ENCODE measurements at regions of chr5 and their contacts with region 1.

Region 1: DNA sequence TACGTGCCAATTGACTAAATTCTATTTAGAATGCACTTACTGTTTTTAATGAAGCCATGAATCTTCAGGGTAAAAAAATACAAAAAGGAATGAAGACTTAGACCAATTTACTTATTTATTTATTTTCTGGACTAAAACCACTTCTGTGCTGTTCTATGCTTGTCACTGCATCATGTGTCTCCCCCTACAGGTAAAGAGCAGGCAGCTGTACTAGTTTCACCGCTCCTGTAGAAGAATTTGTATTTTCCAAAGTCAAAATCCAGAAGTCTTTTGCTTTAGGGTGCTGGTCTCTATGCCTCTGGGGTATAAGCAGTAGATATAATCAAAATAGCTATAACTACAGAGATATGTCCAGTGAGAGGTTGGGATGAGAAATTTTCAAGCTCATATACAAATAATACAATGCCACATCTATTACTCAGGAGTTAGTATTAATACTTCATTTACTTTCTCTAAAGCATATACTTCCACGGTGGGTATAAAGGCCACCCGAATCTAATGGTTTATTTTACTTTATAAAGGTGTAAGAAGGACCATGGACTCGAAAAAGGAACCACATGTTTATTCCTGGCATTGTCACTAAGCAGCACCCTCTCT is 591.5 kb downstream of the RAB3C start:
- DNase-seq: peak; percentile 48
- H3K4me3 Mint-ChIP-seq: no peak overlapping the region
- H3K27ac Mint-ChIP-seq: no peak overlapping the region
- H3K4me1 Mint-ChIP-seq: peaks cover 10% of the 10 kb centered on the region
- H3K27me3 Mint-ChIP-seq: no peaks in the 10 kb centered on the region

Region 2: DNA sequence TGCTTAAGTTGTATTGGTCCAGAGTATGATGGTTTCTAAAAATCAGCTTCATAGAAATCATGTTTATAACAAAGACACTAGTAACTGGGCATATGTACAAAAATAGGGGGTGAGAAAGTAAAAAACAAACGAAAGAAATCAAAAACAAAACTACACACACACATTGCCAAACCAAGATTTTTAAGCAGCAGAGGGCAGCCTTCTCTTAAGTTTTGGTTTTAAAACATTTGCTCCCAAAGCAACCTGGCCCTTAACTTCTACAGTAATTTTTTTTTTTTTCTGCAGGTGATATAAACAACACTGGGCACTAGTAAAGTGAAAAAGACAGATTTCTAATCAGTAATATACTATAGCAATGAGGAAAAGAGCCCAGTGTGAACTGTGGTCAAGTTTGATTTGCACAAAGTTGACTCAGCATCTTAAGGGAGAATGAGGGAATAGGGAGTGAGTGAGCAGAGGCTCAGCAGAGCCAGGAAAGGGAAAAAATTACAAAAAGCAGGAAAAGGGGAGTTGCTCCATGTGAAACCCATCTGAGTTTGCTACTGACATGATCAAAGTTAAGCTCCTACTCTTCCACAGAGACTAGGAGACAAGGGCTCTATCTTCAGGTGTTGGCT is 696.5 kb before region 1 on chr5:
- CTCF ChIA-PET with region 1: no interaction called
- intact Hi-C with region 1: loop called (anchors 10 kb)
- DNase-seq: no peak
- H3K4me3 Mint-ChIP-seq: no peak overlapping the region
- H3K27ac Mint-ChIP-seq: no peak overlapping the region
- H3K4me1 Mint-ChIP-seq: no peaks in the 10 kb centered on the region
- H3K27me3 Mint-ChIP-seq: peaks cover 7% of the 10 kb centered on the region

Region 3: DNA sequence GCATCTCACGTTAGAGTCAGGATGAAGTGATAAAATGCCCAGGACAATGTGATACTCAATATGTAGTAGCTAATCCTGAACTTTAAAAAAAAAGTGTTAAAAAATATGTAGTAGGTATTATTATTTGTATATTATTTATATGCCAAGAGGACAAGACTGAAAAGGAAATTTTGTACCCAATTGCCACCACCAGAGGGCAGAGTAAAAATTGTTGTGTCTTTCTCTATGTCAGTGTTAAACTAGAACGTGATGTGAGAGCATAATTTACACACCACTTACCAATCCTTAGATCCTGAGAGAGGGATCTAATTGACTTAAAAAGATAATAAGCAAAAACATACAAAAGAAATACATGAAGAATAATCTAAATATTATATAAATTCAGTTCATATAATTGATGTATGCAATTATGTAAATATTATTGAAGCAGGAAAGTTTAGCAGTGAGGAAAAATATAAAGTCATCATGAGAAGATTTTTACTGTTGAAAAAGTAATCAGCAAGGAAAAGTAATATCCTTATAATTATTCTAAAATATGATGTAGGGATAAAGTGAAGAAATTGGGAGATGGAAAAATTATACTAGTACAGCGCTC is 302.6 kb before region 1 on chr5:
- CTCF ChIA-PET with region 1: interaction called, 21 read pairs
- intact Hi-C with region 1: loop called (anchors 1 kb)
- DNase-seq: peak; percentile 61
- H3K4me3 Mint-ChIP-seq: no peak overlapping the region
- H3K27ac Mint-ChIP-seq: no peak overlapping the region
- H3K4me1 Mint-ChIP-seq: no peaks in the 10 kb centered on the region
- H3K27me3 Mint-ChIP-seq: no peaks in the 10 kb centered on the region

Region 4: DNA sequence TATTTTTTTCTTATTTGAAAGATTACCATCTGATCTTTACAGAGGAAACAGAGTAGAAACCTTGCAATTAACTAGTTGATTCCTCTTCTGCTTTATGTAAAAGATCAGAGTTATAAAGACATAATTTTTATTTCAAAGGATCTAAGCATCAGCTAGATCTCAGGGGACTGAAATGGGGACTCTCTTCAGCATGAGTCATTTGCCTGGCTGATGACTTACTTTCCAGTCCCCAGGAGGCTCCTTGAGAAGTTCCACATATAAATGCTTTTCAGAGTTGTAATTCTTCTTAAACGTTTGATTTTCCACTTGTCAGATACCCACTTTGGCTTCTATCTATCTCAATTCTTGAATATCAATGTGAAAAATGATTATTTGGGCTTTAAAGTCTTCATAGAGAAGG is 202.0 kb before region 1 on chr5:
- CTCF ChIA-PET with region 1: interaction called, 3 read pairs
- intact Hi-C with region 1: loop called (anchors 2 kb)
- DNase-seq: no peak
- H3K4me3 Mint-ChIP-seq: no peak overlapping the region
- H3K27ac Mint-ChIP-seq: no peak overlapping the region
- H3K4me1 Mint-ChIP-seq: peaks cover 15% of the 10 kb centered on the region
- H3K27me3 Mint-ChIP-seq: no peaks in the 10 kb centered on the region

Region 5: DNA sequence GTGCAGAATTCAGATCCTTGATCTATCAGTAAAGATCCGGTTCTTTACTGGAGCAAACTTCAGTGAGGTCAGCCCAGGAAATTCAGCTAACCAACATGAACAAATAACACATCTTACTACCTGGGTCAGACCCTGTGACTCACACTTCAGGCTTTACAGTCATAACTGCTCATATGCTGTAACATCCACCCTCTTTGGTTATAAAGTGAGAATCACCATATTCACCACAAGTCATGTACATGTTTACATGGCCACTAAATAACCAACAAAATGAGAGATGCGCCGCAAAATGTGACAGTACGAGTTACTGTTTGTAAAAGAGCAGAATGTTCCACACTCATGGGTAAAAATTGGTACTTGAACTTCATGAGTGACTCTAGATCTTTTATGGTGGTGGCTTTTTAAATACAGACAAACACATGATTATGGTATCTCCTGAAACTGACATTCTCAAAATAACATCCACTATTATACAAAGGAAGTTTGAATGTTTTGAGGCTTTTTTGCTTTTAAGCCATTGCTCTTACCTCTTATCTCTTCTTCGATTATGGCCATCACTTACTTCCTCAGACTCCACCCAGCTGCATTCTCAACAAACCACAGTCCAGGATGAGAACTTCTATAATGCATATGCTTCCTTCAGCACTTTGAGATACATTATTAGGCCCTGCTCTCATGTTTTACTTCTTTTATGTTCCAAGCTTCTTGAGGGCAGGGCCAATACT is 74.9 kb before region 1 on chr5:
- CTCF ChIA-PET with region 1: interaction called, 4 read pairs
- intact Hi-C with region 1: loop called (anchors 1 kb)
- DNase-seq: peak; percentile 68
- H3K4me3 Mint-ChIP-seq: no peak overlapping the region
- H3K27ac Mint-ChIP-seq: peak overlapping the region; percentile 20
- H3K4me1 Mint-ChIP-seq: peaks cover 32% of the 10 kb centered on the region
- H3K27me3 Mint-ChIP-seq: no peaks in the 10 kb centered on the region

Region 6: DNA sequence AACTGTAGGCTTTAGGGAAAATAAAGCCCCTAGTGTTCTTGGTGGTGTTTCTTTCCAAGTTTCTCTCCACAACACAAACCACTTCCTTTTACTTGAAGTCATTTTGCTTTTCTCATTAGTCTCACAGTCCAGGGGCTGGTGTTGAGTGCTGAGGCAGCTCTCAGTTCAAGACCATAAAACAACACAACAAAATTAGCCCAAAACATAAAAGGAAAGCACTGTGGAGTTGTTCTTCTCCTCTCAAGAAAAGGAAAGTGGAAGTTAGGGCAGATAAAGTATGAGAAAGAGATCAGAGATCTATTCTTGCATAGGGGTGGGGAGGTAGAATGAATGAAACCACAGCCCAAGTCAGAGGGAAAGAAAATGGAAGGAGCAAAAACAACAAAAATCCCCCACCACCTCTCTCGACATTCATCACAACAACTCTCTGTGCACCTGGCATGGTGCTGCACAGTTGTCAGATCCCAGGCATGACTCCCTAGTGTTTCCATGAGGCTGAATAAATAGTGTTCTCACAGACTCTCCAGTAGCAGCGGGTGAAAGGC is 21.6 kb before region 1 on chr5:
- CTCF ChIA-PET with region 1: interaction called, 12 read pairs
- intact Hi-C with region 1: no loop called
- DNase-seq: peak; percentile 19
- H3K4me3 Mint-ChIP-seq: no peak overlapping the region
- H3K27ac Mint-ChIP-seq: peak overlapping the region; percentile 71
- H3K4me1 Mint-ChIP-seq: peaks cover 3% of the 10 kb centered on the region
- H3K27me3 Mint-ChIP-seq: no peaks in the 10 kb centered on the region

Region 7: DNA sequence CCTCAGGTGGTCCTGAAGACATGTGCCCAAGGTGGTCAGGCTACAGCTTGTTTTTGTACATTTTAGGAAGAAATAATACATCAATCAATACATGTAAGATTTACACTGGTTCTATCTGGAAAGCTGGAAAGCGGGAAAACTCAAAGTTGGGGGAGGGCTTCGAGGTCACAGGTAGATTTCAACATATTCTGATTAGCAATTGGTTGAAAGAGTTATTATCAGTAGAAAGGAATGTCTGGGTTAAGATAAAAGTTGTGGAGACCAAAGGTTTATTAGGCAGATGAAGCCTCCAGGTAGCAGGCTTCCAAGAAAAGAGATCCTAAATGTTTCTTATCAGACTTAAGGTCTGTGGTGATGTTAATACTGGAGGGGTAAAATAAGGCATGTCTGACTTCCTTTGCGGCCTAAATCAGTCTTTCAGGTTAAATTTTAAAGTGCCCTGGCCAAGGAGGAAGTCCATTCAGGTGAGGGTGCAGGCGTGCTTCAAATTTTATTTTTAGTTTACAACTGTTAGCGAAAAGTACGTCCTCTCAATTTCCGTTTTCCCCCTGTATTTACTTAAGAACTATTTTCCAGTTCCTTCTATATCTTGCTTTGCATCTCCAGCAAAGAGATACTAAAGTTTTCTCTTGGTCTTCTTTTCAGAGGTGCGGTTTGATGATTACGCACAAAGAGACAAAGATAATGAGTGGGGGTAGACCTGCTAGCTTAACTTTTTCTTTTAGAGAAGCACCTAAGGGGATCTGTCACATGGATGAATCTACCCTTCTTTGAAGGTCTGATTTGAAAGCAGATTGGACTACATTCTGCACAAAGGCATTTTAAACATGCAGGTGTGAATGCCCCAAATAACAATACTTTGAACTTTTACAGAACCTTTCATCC is 12.9 kb before region 1 on chr5:
- CTCF ChIA-PET with region 1: interaction called, 10 read pairs
- intact Hi-C with region 1: loop called (anchors 1 kb)
- DNase-seq: no peak
- H3K4me3 Mint-ChIP-seq: no peak overlapping the region
- H3K27ac Mint-ChIP-seq: peak overlapping the region; percentile 54
- H3K4me1 Mint-ChIP-seq: peaks cover 14% of the 10 kb centered on the region
- H3K27me3 Mint-ChIP-seq: no peaks in the 10 kb centered on the region

Region 8: DNA sequence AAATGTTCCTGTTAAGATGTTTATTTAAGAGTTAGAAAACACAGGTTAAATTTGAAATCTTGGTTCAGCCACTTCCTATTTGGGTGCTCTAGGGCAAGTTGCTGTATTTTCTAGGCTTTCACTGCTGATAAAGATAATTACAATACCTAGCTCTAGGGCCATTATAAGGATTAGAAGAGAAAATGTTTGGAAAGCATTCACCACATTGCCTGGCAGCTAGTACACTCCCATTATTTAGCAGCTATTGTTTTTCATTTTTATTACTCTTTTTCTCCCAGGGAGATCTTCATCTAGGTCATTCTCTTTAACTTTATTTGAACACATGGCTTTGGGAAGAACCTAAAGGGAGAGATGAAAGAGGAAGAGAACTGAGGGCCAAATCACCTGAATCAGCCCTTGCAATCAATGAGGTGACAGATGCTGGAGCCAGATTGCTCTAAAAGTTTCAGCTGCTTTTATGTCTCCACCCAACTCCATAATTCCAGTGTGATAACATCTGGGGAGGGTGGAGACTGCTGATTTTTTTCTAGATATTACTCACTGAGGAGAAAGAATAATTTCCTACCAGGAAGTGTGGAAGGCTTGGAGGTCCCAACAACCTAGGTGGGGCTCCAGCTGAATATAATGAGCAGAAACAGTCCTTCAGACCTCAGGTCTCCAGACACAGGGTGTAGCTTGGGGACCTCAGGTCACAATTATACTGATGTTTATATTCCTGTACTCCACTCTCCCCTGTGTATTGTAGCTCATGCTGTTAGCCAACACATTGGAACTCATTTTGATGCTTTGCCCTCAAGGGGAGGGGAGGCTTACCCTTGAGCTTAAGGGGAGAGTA is 48.6 kb after region 1 on chr5:
- CTCF ChIA-PET with region 1: no interaction called
- intact Hi-C with region 1: no loop called
- DNase-seq: no peak
- H3K4me3 Mint-ChIP-seq: no peak overlapping the region
- H3K27ac Mint-ChIP-seq: no peak overlapping the region
- H3K4me1 Mint-ChIP-seq: no peaks in the 10 kb centered on the region
- H3K27me3 Mint-ChIP-seq: peaks cover 4% of the 10 kb centered on the region